ENCODE measurements at regions of chr15 and their contacts with region 1.

Region 1: GRCh38 chr15:58167095-58167691 is 29.0 kb downstream of the AQP9 start:
- DNase-seq: no peak
- ATAC-seq: no peak
- H3K4me3 Mint-ChIP-seq: no peak overlapping the region
- H3K27ac Mint-ChIP-seq: no peak overlapping the region
- H3K4me1 Mint-ChIP-seq: no peaks in the 10 kb centered on the region
- H3K27me3 Mint-ChIP-seq: peaks cover 15% of the 10 kb centered on the region

Region 2: DNA sequence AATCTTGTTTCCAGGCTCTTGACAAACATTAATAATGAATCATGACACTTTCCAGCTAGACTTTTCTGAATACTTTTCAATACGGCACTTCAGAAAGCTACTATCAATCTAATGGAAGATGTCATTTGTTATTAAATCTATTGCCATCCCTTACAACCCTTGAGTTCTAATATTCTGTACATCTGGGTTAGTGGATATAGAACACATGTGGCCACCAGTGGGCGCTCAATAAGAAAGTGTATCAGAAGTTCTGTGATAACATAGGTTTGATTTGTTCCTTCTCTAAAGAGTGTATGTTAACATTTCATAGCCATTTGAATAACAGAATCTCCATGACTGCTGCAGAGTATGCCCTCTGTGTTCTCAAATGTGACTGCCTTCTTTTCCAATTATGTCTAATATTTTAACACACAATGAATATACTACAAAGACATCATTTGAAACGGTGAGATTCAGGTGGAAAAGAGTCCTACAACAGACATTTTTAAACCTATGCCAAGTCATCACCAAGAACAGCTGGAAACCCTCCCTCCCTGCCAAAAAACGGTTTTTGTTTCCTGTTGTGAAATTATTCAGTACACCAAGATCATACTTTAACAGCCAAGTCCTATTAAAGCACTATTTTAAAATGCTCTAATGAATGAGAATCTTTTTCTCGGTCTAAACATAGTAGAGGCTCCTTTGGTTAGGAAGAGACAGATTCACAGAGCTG is 123.8 kb before region 1 on chr15:
- CTCF ChIA-PET with region 1: no interaction called
- POLR2A ChIA-PET with region 1: no interaction called
- intact Hi-C with region 1: loop called in 1 of 2 experiments (anchors 1 kb)
- DNase-seq: peak; percentile 64
- ATAC-seq: no peak
- H3K4me3 Mint-ChIP-seq: no peak overlapping the region
- H3K27ac Mint-ChIP-seq: no peak overlapping the region
- H3K4me1 Mint-ChIP-seq: peaks cover 3% of the 10 kb centered on the region
- H3K27me3 Mint-ChIP-seq: peaks cover 27% of the 10 kb centered on the region

Region 3: DNA sequence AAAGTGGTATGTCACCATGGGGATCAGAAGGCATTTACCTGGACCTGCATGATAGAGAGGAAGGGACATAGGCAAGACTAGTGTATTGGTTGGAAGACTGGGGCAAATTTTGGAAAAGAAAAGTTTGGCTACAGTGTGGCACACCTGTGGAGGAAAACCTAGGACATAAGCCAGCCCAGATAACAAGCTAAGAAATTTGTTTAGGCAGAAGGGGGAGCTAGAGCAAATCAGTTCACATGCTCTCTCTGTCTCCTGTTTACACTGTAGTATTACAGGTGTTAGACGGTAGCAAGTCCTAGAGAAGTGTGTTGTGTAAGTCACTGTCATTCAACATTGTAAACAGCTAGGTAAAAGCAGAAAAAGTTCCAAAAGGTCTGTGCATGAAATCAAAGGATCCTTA is 89.8 kb before region 1 on chr15:
- CTCF ChIA-PET with region 1: no interaction called
- POLR2A ChIA-PET with region 1: no interaction called
- intact Hi-C with region 1: no loop called
- DNase-seq: no peak
- ATAC-seq: no peak
- H3K4me3 Mint-ChIP-seq: no peak overlapping the region
- H3K27ac Mint-ChIP-seq: no peak overlapping the region
- H3K4me1 Mint-ChIP-seq: no peaks in the 10 kb centered on the region
- H3K27me3 Mint-ChIP-seq: peaks cover 19% of the 10 kb centered on the region

Measured in activated CD4-positive, alpha-beta T cell treated with anti-CD3 and anti-CD28 coated beads for 36 hours (primary cell).